ENCODE measurements at regions of chr1 and their contacts with region 1.

Region 1: DNA sequence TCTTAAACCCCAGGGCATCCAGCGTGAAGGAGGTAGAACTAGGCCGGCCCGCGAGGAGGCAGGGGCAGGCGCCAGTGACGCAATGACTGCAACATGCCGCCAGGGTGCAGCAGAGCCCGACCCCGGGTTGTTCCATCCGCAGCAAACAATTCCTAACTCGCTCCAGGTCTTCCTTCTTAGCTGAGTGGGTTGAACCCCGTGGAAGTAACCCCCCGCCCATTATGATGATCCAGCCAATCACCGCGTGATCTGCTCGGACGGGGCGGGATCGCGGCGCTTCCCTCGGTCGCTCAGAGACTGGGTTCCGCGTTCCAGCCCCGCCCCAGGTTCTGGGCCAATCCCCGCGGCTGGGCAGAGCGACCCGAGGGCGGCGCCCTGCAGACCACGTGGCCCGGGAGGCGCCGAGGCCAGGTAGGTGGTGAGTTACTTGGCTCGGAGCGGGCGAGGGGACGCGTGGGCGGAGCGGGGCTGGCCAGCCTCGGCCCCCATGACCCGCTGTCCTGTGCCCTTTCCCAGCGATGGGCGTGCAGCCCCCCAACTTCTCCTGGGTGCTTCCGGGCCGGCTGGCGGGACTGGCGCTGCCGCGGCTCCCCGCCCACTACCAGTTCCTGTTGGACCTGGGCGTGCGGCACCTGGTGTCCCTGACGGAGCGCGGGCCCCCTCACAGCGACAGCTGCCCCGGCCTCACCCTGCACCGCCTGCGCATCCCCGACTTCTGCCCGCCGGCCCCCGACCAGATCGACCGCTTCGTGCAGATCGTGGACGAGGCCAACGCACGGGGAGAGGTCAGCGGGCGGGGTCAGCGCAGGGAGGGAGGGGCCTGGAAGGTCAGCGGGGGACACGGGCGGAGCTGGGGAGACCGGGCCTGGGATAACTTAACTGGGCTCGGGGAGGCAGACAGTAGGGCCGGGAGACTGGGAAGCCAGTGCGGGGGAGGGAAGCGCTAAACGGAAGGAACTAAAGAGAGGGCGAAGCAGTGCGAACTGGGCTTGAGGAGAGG is at the start of gene DUSP23:
- DNase-seq: peak; percentile 98
- ATAC-seq: peak; percentile 98 to 99
- total RNA-seq, gene DUSP23: 25.4 to 36.0 TPM

Region 2: GRCh38 chr1:159214149-159214760 is 566.6 kb before region 1 on chr1:
- intact Hi-C with region 1: loop called in 1 of 2 experiments (anchors 10 kb)
- DNase-seq: peak; percentile 36
- ATAC-seq: peak in 1 of 2 donors; percentile 61

Region 3: GRCh38 chr1:159854693-159855192 is 73.9 kb after region 1 on chr1:
- intact Hi-C with region 1: loop called in 1 of 2 experiments (anchors 5 kb)
- DNase-seq: peak; percentile 90
- ATAC-seq: peak; percentile 97

Region 4: GRCh38 chr1:159891275-159892157 is 110.6 kb after region 1 on chr1:
- intact Hi-C with region 1: loop called in 1 of 2 experiments (anchors 5 kb)
- DNase-seq: peak; percentile 87
- ATAC-seq: peak; percentile 88 to 94

Measured in left cardiac atrium (tissue), 4 donors.